Cardiac septum (tissue), 1 donor: ENCODE measurements at regions of chr11 and their contacts with region 1.

Region 1: DNA sequence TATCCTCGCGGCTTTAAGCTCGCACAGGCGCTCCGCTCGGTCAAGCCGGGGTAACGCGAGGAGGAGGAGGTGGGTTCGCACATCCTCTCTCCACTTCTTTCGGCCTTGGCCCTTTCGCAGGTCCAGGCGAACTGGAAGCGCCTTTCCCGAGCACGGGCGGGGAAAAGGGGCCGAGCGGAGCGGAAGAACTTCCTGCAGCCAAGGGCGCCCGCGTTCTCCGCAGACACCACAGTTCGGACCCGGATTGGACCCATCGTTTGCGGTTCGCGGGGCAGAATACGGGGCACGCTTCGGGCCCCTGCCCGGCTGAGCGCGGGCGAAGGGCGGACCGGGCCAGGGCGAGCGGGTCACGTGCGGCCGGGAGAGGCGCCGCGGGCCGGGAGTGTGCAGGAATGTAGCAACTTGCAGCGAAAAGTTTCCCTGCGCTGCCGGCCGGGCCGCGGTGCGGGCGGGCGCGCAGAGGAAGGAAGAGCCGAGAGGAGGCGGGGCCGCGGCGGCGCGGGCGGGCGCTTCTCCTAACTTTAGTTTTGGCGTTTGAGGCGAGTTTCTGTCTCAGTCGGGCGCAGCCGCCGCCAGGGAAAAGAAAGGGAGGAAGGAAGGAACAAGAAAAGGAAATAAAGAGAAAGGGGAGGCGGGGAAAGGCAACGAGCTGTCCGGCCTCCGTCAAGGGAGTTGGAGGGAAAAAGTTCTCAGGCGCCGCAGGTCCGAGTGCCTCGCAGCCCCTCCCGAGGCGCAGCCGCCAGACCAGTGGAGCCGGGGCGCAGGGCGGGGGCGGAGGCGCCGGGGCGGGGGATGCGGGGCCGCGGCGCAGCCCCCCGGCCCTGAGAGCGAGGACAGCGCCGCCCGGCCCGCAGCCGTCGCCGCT is at the start of gene YAP1:
- DNase-seq: peak; percentile 92
- total RNA-seq, gene YAP1: 74.9 TPM

Region 2: DNA sequence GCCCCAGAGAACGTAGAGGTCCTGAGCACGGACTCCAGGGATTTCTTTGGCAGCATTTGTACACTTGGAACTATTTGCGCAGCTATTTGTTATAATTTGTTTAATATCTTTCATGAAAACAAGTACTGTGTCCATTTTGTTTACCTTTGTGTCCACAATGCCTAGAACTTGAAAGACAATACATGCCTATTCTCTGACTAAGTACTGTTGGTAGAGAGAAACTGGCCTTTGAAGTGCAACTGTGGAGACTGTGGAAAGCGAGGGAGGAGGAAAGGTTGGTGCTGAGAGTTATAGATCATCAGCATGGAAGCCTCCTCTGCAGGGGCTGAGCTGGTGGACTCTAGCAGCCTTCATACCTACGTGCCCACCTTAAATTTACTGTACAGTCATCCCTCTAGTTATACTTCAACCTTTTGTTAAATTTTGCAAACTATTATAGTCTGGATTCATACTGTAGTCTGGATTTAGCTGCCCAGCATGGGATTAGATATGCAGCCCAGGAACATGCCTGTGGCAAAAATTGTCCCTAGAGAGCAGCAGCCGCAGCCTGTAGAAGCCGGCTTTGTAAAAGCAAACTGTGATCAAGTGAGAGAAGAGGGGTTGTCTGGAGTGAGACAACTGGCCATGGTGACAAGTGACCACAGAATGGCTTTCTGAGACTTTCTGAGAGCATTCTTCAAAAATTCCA is 24.1 kb before region 1 on chr11:
- intact Hi-C with region 1: no loop called
- DNase-seq: no peak

Region 3: GRCh38 chr11:102139081-102139498 is 29.0 kb after region 1 on chr11:
- intact Hi-C with region 1: loop called (anchors 1 kb)
- DNase-seq: no peak

Region 4: GRCh38 chr11:102157219-102157618 is 47.1 kb after region 1 on chr11:
- intact Hi-C with region 1: loop called (anchors 5 kb)
- DNase-seq: no peak

Region 5: DNA sequence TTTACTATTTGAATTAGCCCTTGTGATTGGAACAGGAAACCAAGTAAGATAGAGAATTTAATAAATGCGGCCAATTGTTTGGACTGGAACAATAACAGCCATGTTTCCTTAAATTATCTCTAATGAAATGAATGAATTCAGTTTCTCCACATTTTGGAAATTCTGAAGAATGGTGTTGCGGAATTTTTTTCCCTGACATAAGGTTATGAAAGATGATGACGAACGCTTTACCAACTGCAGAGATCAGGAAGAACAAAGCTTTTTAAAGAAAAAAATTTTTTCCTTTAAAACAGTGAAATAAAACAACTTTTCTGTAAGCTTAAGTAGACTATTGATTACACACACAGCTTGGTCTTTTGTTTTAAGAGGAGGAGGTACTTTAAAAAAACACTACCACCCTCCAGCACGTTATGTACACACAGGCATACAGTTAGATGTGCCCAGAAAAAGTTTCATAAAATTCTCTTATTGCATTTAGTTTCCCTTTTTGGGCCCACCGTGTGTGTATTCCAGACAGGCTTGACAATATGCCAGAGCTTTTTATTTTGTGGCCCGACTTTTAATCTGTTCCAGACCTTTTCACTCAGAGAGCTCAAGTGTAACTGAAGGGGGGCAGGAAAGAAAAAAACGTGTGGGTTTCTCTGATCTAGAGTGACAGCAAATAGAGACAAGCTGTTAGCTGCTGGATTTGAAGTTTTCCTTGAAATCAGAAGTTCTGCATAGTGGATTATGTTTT is 77.5 kb after region 1 on chr11:
- intact Hi-C with region 1: no loop called
- DNase-seq: no peak

Region 6: DNA sequence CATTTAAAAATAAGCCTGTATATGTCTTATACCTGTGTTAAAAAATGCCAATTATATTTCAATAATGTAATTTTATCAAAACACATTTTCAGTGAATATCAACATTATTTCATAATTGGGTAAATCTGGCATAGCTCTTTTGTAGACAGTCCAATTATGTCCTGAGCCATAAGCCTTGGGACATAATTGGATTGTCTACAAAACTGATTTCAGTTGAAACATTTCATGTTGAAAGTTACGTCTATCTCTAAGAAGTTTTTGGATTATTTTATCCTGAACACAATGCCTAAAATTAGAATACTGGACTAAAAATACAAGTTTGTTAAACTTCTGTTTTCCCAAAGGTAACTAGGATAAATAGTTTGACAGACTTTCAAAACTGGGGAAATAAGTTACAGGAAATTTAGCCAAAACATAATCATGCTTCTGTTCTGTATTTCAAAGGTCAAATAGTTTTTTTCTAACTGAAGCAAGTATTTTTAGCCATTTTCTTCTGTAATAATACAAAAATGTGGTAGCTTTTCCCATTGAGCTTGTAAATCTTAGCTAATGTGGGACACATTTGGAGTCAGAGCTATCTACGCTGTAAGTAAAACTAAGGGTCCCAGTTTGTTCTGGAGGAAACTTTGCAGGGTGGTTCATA is 106.4 kb after region 1 on chr11:
- intact Hi-C with region 1: loop called (anchors 5 kb)
- DNase-seq: no peak

Region 7: GRCh38 chr11:102268329-102269193 is 158.4 kb after region 1 on chr11:
- intact Hi-C with region 1: loop called (anchors 2 kb)
- DNase-seq: peak; percentile 85

Region 8: GRCh38 chr11:102346748-102347461 is 236.8 kb after region 1 on chr11 and contains the start of gene BIRC2:
- intact Hi-C with region 1: loop called (anchors 5 kb)
- DNase-seq: peak; percentile 98
- total RNA-seq, gene BIRC2: 31.5 TPM